B cell (primary cell): ENCODE measurements at regions of chr11 and their contacts with region 1.

Region 1: GRCh38 chr11:65859200-65859811 is 927 bp upstream of the MUS81 start:
- DNase-seq: peak; percentile 97
- ATAC-seq: peak; percentile 62
- H3K4me3 ChIP-seq: peak overlapping the region; percentile 81 to 98 (median 95)
- H3K4me3 Mint-ChIP-seq: peak overlapping the region; percentile 92
- H3K27ac ChIP-seq: peak overlapping the region; percentile 77 to 89
- H3K27ac Mint-ChIP-seq: peak overlapping the region; percentile 98
- H3K4me1 ChIP-seq: peaks cover 27 to 54% of the 10 kb centered on the region in 2 donors
- H3K4me1 Mint-ChIP-seq: peaks cover 47% of the 10 kb centered on the region
- H3K27me3 ChIP-seq: no peaks in the 10 kb centered on the region
- H3K27me3 Mint-ChIP-seq: no peaks in the 10 kb centered on the region
- CTCF ChIP-seq: no peak

Region 2: DNA sequence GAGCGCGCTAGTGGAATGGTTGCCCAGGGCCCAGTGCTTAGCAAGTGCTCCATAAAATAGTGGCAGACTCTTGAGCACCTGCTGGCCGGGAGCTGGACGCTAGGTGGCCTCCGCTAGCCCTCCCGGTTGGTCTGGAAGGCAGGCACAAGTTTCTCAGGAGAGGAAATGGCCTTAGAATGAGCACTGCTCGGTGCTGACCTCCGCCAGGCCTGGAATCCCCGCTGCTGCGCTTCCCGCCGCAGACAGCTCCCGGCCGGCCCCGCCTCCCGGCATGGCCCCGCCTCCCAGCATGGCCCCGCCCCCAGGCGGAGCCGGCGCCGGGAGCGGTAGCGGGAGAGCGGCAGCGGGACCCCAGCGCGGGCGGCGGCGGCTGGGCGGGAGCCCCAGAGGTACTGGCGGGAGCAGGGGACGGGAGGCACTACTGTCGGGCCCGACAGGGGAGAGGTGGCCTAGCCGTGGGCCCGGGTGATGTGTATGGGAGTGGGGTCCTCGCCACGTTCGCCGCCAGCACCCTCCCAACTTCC is 221.4 kb before region 1 on chr11 and contains the start of gene SIPA1:
- CTCF ChIA-PET with region 1: interaction called, 5 read pairs
- POLR2A ChIA-PET with region 1: interaction called, 23 read pairs
- intact Hi-C with region 1: no loop called
- DNase-seq: peak; percentile 88
- ATAC-seq: peak; percentile 32
- H3K4me3 ChIP-seq: peak within 1 kb of the TSS; percentile 70 to 97 (median 93)
- H3K4me3 Mint-ChIP-seq: peak within 1 kb of the TSS; percentile 99
- H3K27ac ChIP-seq: peak within 1 kb of the TSS; percentile 100
- H3K27ac Mint-ChIP-seq: peak within 1 kb of the TSS; percentile 98
- H3K4me1 ChIP-seq: peaks cover 37 to 66% of the 10 kb centered on the region in 2 donors
- H3K4me1 Mint-ChIP-seq: peaks cover 42% of the 10 kb centered on the region
- H3K27me3 ChIP-seq: no peaks in the 10 kb centered on the region
- H3K27me3 Mint-ChIP-seq: no peaks in the 10 kb centered on the region
- CTCF ChIP-seq: no peak
- total RNA-seq, gene SIPA1: 448 and 461 TPM in 2 replicates

Region 3: DNA sequence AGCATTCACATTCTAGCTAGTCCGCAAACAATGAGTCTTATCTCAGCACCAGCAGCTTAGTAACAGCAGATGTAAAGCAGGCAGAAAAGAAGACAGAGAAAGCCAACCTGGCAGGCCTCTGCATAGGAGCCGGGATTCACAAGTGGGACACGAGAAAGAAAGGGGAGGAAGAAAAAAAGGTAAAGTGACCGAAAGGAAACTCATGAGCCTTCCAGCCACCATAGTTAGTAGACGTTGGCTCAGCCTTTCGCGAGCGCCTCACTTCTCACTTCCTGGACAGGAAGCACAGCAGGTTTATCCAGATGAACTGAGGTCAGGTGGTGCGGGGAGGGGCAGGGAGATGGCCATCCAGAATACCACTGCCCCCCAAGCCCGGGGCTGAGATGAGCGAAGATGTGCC is 166.9 kb before region 1 on chr11:
- CTCF ChIA-PET with region 1: no interaction called
- POLR2A ChIA-PET with region 1: no interaction called
- intact Hi-C with region 1: no loop called
- DNase-seq: no peak
- ATAC-seq: no peak
- H3K4me3 ChIP-seq: no peak overlapping the region
- H3K4me3 Mint-ChIP-seq: no peak overlapping the region
- H3K27ac ChIP-seq: no peak overlapping the region
- H3K27ac Mint-ChIP-seq: no peak overlapping the region
- H3K4me1 ChIP-seq: no peaks in the 10 kb centered on the region
- H3K4me1 Mint-ChIP-seq: no peaks in the 10 kb centered on the region
- H3K27me3 ChIP-seq: no peaks in the 10 kb centered on the region
- H3K27me3 Mint-ChIP-seq: peaks cover 3% of the 10 kb centered on the region
- CTCF ChIP-seq: no peak

Region 4: DNA sequence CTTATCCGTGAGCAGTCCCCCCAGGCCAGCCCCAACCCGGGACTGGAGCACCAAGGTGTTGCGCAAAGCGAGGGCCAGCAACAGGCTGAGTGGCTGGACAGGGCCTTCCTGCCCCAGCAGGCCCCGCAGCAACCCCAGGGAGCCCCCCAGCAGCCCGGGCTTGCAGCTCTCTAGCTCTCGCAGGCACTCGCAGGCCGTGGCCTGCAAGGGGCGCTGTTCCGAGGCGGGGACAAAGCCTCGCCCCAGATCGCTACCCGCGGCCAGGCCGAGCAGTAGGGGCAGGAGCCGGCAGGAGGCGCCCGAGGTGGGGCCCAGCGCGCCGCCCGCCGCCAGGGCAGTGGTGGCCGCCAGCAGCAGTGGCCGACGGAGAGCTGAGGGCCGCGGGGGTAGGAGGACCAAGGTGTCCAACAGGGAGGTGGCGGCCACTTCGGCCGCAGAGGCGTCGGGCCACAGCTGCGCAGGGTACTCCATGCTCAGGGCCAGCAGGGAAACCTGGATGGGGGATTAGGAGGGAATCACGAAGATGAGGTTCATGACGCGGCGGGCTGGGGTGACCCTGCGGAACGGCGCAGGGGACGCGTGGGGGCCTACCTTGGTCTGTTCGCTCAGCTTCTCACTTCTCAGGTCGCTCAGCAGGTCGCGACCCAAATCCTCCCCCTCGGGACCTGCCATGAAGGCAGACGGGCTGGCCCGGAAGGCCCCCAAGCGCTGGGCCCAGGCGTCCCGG is 79.3 kb before region 1 on chr11:
- CTCF ChIA-PET with region 1: interaction called, 10 read pairs
- POLR2A ChIA-PET with region 1: no interaction called
- intact Hi-C with region 1: loop called (anchors 2 kb)
- DNase-seq: peak; percentile 87
- ATAC-seq: peak; percentile 65
- H3K4me3 ChIP-seq: peak overlapping the region; percentile 42 to 81 (median 74)
- H3K4me3 Mint-ChIP-seq: peak overlapping the region; percentile 89
- H3K27ac ChIP-seq: peak overlapping the region; percentile 16 to 79
- H3K27ac Mint-ChIP-seq: peak overlapping the region; percentile 83
- H3K4me1 ChIP-seq: peaks cover 12 to 18% of the 10 kb centered on the region in 2 donors
- H3K4me1 Mint-ChIP-seq: peaks cover 15% of the 10 kb centered on the region
- H3K27me3 ChIP-seq: no peaks in the 10 kb centered on the region
- H3K27me3 Mint-ChIP-seq: no peaks in the 10 kb centered on the region
- CTCF ChIP-seq: peak; percentile 100

Region 5: DNA sequence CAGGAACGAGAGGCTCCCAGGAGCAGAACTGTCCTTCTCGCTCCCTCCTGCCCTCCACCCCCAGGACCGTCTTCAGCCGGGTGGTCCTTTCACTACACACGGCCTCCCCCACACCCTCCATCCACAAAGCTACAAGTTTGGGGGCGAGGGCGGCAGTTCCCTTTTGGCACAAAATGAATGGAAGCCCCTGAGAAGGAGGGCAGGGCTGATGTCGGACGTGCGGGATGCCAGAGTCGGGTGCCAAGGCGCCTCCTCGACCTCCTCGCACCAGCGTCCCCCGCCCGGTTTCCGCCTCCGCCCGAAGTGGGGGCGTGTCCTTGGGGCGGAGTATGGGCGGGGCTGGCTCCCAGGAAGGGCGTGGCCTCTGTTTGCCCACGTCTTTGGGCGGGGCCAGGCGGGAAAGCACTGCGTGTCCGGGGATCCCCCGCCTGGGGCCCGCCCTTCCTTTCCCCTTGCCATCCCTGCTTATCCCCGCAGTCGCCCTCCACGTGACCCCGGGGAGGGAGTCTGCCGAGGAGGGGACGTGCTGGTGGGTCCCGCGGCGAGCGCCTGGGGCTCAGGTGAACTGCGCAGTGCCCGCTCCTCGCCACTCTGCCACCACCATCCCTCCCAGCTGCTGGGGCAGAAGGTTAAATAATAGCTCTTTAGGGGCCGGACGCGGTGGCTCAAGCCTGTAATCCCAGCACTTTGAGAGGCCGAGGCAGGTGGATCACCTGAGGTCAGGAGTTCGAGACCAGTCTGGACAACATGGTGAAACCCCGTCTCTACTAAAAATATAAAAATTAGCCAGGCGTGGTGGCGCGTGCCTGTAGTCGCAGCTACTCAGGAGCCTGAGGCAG is 14.2 kb after region 1 on chr11:
- CTCF ChIA-PET with region 1: interaction called, 71 read pairs
- POLR2A ChIA-PET with region 1: interaction called, 24 read pairs
- intact Hi-C with region 1: loop called (anchors 2 kb)
- DNase-seq: peak; percentile 97
- ATAC-seq: peak; percentile 98
- H3K4me3 ChIP-seq: peak overlapping the region; percentile 52 to 79 (median 63)
- H3K4me3 Mint-ChIP-seq: peak overlapping the region; percentile 92
- H3K27ac ChIP-seq: peak overlapping the region; percentile 81 to 91
- H3K27ac Mint-ChIP-seq: peak overlapping the region; percentile 91
- H3K4me1 ChIP-seq: peaks cover 10 to 29% of the 10 kb centered on the region in 2 donors
- H3K4me1 Mint-ChIP-seq: peaks cover 26% of the 10 kb centered on the region
- H3K27me3 ChIP-seq: no peaks in the 10 kb centered on the region
- H3K27me3 Mint-ChIP-seq: peaks cover 5% of the 10 kb centered on the region
- CTCF ChIP-seq: no peak

Region 6: DNA sequence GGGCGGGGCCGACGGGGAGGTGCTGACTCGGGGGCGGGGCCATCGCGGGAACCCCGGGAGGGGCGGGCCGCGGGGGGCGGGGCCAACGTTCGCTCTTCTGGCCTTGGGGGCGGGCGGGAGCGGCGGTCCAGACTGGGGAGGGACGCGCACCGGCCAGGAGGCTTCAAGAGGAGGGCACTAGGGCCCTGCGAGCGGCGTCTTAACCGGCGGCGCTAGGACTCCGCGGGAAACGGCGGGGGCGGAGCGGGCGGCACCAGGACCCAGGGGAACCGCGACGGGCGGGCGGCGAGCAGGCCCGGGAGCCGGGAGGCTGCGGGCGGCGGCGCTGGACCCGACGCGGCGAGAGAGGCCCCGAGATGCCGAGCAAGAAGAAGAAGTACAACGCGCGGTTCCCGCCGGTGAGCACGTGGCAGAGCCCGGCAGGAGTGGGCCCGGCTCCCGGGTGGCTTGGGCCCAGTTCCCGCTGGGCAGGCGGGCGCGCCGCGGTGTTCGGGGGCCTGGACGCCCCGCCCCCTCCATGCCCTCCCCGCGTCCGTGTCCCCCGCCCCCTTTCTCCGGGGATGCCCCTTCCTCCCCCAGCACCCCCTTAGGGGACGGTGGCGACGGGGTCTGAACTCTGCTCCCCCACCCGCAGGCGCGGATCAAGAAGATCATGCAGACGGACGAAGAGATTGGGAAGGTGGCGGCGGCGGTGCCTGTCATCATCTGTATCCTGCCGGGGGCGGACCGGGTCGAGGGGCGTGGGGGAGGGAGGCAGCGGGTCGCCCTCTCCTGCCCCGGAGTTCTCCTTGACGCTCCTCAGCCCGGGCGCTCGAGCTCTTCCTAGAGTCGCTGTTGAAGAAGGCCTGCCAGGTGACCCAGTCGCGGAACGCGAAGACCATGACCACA is 60.1 kb after region 1 on chr11 and contains the start of gene DRAP1:
- CTCF ChIA-PET with region 1: interaction called, 4 read pairs
- POLR2A ChIA-PET with region 1: interaction called, 4 read pairs
- intact Hi-C with region 1: loop called (anchors 2 kb)
- DNase-seq: peak; percentile 98
- ATAC-seq: peak; percentile 87
- H3K4me3 ChIP-seq: peak within 1 kb of the TSS; percentile 83 to 99 (median 93)
- H3K4me3 Mint-ChIP-seq: peak within 1 kb of the TSS; percentile 95
- H3K27ac ChIP-seq: peak within 1 kb of the TSS; percentile 66 to 85
- H3K27ac Mint-ChIP-seq: peak within 1 kb of the TSS; percentile 89
- H3K4me1 ChIP-seq: peaks cover 19 to 50% of the 10 kb centered on the region in 2 donors
- H3K4me1 Mint-ChIP-seq: peaks cover 44% of the 10 kb centered on the region
- H3K27me3 ChIP-seq: no peaks in the 10 kb centered on the region
- H3K27me3 Mint-ChIP-seq: no peaks in the 10 kb centered on the region
- CTCF ChIP-seq: no peak
- total RNA-seq, gene DRAP1: 62.9 and 71.7 TPM in 2 replicates

Region 7: DNA sequence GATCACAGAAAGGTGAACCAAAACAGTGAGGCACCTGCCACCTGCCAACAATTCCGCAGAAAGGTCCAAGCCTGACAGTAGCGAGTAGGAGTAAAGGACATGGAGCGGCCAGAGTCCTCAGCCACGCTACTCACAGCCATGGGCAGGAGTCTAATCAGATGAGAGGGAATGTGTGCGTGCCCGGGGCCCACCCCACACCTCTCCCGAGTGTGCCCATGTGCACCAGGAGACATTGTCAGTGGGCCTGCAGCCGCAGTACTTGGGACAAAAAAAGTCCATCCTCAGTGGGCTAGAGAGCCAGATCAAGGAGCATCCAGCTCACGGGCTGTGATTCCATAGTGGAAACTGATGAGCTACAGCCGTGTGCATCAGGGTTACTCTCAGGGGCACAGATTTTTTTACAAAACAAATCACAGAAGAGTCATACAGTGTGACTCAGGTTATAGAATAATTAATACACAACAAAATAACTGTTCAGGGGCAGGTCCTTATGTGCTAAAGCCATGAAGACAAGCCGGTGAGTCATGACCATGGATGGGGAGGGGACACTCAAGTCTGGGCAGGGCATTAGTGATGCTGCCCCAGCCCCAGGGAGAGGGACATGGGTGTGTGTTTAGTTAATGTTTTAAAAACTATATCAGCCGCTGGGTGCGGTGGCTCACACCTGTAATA is 114.3 kb after region 1 on chr11:
- CTCF ChIA-PET with region 1: no interaction called
- POLR2A ChIA-PET with region 1: no interaction called
- intact Hi-C with region 1: no loop called
- DNase-seq: no peak
- ATAC-seq: no peak
- H3K4me3 ChIP-seq: no peak overlapping the region
- H3K4me3 Mint-ChIP-seq: no peak overlapping the region
- H3K27ac ChIP-seq: no peak overlapping the region
- H3K27ac Mint-ChIP-seq: no peak overlapping the region
- H3K4me1 ChIP-seq: no peaks in the 10 kb centered on the region
- H3K4me1 Mint-ChIP-seq: no peaks in the 10 kb centered on the region
- H3K27me3 ChIP-seq: no peaks in the 10 kb centered on the region
- H3K27me3 Mint-ChIP-seq: no peaks in the 10 kb centered on the region
- CTCF ChIP-seq: no peak

Region 8: GRCh38 chr11:66001942-66002647 is 142.8 kb after region 1 on chr11 and contains the starts of genes BANF1 and EIF1AD:
- CTCF ChIA-PET with region 1: interaction called, 11 read pairs
- POLR2A ChIA-PET with region 1: interaction called, 12 read pairs
- intact Hi-C with region 1: loop called (anchors 1 kb)
- DNase-seq: peak; percentile 98
- ATAC-seq: peak; percentile 80
- H3K4me3 ChIP-seq: peak within 1 kb of the TSS; percentile 75 to 100 (median 96)
- H3K4me3 Mint-ChIP-seq: peak within 1 kb of the TSS; percentile 98
- H3K27ac ChIP-seq: peak within 1 kb of the TSS; percentile 89 to 94
- H3K27ac Mint-ChIP-seq: peak within 1 kb of the TSS; percentile 99
- H3K4me1 ChIP-seq: peaks cover 16 to 25% of the 10 kb centered on the region in 2 donors
- H3K4me1 Mint-ChIP-seq: peaks cover 34% of the 10 kb centered on the region
- H3K27me3 ChIP-seq: no peaks in the 10 kb centered on the region
- H3K27me3 Mint-ChIP-seq: no peaks in the 10 kb centered on the region
- CTCF ChIP-seq: no peak
- total RNA-seq, gene BANF1: 99.3 and 99.5 TPM in 2 replicates
- total RNA-seq, gene EIF1AD: 61.0 and 65.2 TPM in 2 replicates

Region 9: GRCh38 chr11:66268283-66268951 is 409.1 kb after region 1 on chr11 and contains the start of gene RAB1B:
- CTCF ChIA-PET with region 1: no interaction called
- POLR2A ChIA-PET with region 1: no interaction called
- intact Hi-C with region 1: loop called (anchors 5 kb)
- DNase-seq: peak; percentile 100
- ATAC-seq: peak; percentile 77
- H3K4me3 ChIP-seq: peak within 1 kb of the TSS; percentile 83 to 100 (median 98)
- H3K4me3 Mint-ChIP-seq: peak within 1 kb of the TSS; percentile 95
- H3K27ac ChIP-seq: peak within 1 kb of the TSS; percentile 81 to 97
- H3K27ac Mint-ChIP-seq: peak within 1 kb of the TSS; percentile 96
- H3K4me1 ChIP-seq: peaks cover 14 to 27% of the 10 kb centered on the region in 2 donors
- H3K4me1 Mint-ChIP-seq: peaks cover 29% of the 10 kb centered on the region
- H3K27me3 ChIP-seq: no peaks in the 10 kb centered on the region
- H3K27me3 Mint-ChIP-seq: no peaks in the 10 kb centered on the region
- CTCF ChIP-seq: no peak
- total RNA-seq, gene RAB1B: 76.0 and 77.8 TPM in 2 replicates